Panc1 (cell line): ENCODE measurements at regions of chr11 and their contacts with region 1.

Region 1: DNA sequence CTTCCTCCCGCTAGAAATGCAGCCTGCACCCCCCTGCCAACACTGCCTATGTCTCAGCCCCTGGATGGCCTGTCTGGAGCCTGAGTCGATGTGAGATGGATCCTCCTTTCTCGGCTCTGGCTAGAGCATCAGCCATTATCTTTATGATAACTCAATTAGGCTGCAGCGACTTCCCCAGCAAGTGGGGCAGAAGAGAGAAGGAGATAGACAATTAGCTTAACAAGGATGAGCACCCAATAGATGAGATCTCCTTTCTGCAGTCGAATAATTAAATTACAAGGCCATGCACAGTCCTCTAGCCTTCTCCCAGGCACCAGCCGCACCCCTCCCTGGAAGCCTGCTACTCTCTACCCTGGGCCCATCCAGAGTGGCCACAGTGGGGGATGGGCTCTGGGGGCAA is 179.3 kb downstream of the CEP164 start:
- DNase-seq: no peak
- ATAC-seq: no peak
- H3K4me3 ChIP-seq: no peak overlapping the region
- H3K27ac ChIP-seq: no peak overlapping the region
- H3K4me1 ChIP-seq: no peaks in the 10 kb centered on the region
- H3K27me3 ChIP-seq: peaks cover 2% of the 10 kb centered on the region; the same call in 1 of the 2 replicates
- CTCF ChIP-seq: no peak

Region 2: DNA sequence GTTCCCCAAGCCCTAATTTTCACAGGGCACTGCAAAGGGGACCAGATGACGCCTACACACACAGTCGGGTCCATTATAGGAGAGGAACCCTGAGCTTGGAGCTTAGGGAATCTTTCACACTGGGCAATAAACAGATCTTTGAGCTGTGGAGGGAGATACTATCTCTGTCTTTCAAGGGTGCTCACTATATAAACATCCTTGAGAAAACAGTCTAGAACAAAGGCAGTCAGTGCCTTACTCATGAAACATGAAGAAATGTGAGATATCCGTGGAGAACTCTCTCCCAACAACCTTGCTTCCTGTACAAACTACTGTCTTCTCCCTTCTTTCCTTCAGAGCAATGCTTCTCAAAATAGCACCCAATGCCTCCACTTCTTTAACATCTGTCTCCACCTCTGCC is 560.6 kb before region 1 on chr11:
- CTCF ChIA-PET with region 1: no interaction called
- POLR2A ChIA-PET with region 1: no interaction called
- in situ Hi-C with region 1: no loop called
- intact Hi-C with region 1: no loop called
- DNase-seq: no peak
- ATAC-seq: peak; percentile 73
- H3K4me3 ChIP-seq: no peak overlapping the region
- H3K27ac ChIP-seq: no peak overlapping the region
- H3K4me1 ChIP-seq: peaks cover 3% of the 10 kb centered on the region
- H3K27me3 ChIP-seq: no peaks in the 10 kb centered on the region
- CTCF ChIP-seq: no peak

Region 3: DNA sequence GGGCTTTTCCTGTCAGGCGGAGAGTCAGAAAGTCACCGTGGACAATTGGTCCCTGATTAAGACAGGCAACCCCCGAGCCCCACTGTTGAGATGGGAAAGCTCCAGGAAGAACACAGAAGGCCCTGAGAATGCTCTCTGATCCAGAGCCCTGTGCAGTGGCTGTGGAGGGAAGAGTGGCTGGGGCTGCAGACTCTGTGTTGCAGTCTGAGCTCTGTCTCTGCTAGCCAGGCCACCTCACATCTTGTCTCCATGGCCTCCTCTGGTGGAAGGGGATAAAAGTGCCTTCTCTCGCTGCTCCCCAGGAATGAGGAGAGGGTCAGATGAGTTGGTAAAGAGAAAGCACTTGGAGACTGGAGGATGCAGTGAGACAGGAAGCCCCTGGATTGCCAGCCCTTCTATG is 38.1 kb before region 1 on chr11:
- CTCF ChIA-PET with region 1: no interaction called
- POLR2A ChIA-PET with region 1: no interaction called
- in situ Hi-C with region 1: no loop called
- intact Hi-C with region 1: no loop called
- DNase-seq: no peak
- ATAC-seq: peak; percentile 67
- H3K4me3 ChIP-seq: no peak overlapping the region
- H3K27ac ChIP-seq: no peak overlapping the region
- H3K4me1 ChIP-seq: no peaks in the 10 kb centered on the region
- H3K27me3 ChIP-seq: no peaks in the 10 kb centered on the region; the same call in 1 of the 2 replicates
- CTCF ChIP-seq: no peak; the same call in 1 of the 2 replicates

Region 4: DNA sequence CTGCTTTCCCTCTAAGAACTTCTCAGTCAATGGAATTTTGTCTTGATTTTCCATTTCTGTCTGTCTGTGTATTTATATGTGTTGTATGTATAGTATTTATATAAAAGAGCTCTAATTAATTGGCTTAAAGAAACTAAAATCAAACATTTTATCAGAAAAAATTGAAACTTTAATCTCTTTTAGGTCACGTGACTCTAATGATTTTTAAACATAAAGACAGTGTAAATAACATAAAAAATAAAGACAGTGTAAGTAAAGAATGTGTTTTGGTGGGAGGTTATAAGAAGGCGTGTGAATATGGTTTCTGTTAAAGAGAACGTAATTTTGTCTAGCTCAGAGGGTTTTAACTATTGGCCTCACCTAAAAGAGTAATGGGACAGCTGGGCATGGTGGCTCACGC is 715.5 kb after region 1 on chr11:
- CTCF ChIA-PET with region 1: interaction called, 11 read pairs
- POLR2A ChIA-PET with region 1: no interaction called
- in situ Hi-C with region 1: no loop called
- intact Hi-C with region 1: no loop called
- DNase-seq: no peak
- ATAC-seq: no peak
- H3K4me3 ChIP-seq: no peak overlapping the region
- H3K27ac ChIP-seq: no peak overlapping the region
- H3K4me1 ChIP-seq: no peaks in the 10 kb centered on the region
- H3K27me3 ChIP-seq: peaks cover 26% of the 10 kb centered on the region
- CTCF ChIP-seq: no peak